Natural killer cell (primary cell): ENCODE measurements at regions of chr11 and their contacts with region 1.

Region 1: GRCh38 chr11:33065445-33066178 is 26.2 kb downstream of the TCP11L1 start:
- DNase-seq: peak; percentile 62 to 85
- ATAC-seq: peak; percentile 87 to 93 (median 92)
- H3K4me3 ChIP-seq: no peak overlapping the region
- H3K4me3 Mint-ChIP-seq: no peak overlapping the region
- H3K27ac ChIP-seq: no peak overlapping the region
- H3K27ac Mint-ChIP-seq: peak overlapping the region in 1 of 2 donors; percentile 42
- H3K4me1 ChIP-seq: peaks cover 20% of the 10 kb centered on the region
- H3K4me1 Mint-ChIP-seq: peaks cover 21 to 24% of the 10 kb centered on the region in 2 donors
- H3K27me3 ChIP-seq: no peaks in the 10 kb centered on the region
- H3K27me3 Mint-ChIP-seq: no peaks in the 10 kb centered on the region
- CTCF ChIP-seq: peak; percentile 83

Region 2: GRCh38 chr11:32809313-32809712 is 256.3 kb before region 1 on chr11:
- intact Hi-C with region 1: loop called (anchors 1 kb)
- DNase-seq: peak in 1 of 2 donors; percentile 54
- ATAC-seq: peak; percentile 62 to 74 (median 62)
- H3K4me3 ChIP-seq: no peak overlapping the region
- H3K4me3 Mint-ChIP-seq: no peak overlapping the region
- H3K27ac ChIP-seq: no peak overlapping the region
- H3K27ac Mint-ChIP-seq: no peak overlapping the region
- H3K4me1 ChIP-seq: no peaks in the 10 kb centered on the region
- H3K4me1 Mint-ChIP-seq: no peaks in the 10 kb centered on the region
- H3K27me3 ChIP-seq: no peaks in the 10 kb centered on the region
- H3K27me3 Mint-ChIP-seq: no peaks in the 10 kb centered on the region
- CTCF ChIP-seq: peak; percentile 58

Region 3: DNA sequence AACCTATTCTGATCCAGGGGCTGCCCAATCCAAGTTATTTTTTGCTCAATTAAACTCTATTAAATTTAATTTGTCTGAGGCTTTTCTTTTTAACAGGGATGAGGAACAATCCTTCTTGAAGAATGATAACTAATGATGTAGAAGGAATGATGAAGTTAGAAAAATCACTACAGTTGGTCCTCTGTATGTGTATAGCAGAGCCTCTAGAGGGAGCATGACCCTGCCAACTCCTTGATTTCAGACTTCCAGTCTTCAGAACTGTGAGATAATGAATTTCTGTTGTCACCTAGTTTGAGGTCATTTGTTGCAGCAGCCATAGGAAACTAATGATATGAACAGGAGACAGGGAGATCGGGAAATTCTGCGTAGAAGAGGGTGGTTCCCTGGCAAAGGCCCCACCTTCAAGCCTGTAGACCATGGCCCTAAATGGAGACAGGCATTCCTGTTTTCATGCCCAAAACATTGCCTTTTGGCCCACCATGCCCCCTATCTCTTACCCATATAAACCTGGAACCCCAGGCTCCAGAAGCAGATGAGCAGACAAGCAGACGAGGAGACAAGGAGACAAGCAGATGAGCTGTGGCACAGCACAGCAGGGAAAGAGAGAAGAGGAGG is 180.7 kb before region 1 on chr11:
- intact Hi-C with region 1: loop called (anchors 2 kb)
- DNase-seq: peak in 1 of 2 donors; percentile 34
- ATAC-seq: peak in 2 of 3 donors; percentile 48 to 52
- H3K4me3 ChIP-seq: no peak overlapping the region
- H3K4me3 Mint-ChIP-seq: no peak overlapping the region
- H3K27ac ChIP-seq: no peak overlapping the region
- H3K27ac Mint-ChIP-seq: no peak overlapping the region
- H3K4me1 ChIP-seq: no peaks in the 10 kb centered on the region
- H3K4me1 Mint-ChIP-seq: no peaks in the 10 kb centered on the region
- H3K27me3 ChIP-seq: no peaks in the 10 kb centered on the region
- H3K27me3 Mint-ChIP-seq: peaks cover 0 to 6% of the 10 kb centered on the region in 2 donors
- CTCF ChIP-seq: peak; percentile 29

Region 4: DNA sequence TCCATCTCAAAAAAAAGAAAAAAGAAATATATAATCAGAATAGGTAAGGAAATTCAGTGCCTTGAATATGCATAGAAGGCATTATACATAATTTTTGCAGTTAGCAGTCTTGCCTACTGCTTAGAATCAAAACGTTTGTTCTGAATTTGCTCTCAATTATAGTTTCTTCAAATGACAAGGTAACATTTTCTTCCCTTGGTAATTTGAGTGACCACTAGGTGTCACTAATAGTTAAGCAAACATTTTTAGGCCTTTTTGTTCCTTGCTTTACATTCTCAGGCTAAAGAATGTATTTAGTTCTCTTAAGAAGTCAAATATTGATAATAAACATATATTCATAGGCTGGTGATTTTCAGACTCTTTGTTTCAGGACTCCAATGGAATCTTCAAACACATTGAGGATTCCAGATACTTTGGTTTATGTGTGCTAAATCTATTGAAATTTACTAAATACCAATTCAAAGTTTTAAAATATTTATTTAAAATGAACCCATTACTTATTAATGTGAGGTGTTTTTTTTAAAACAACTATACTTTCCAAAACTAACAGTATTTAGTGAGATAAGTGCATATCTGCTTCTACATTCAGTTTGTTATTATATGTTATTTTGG is 105.0 kb before region 1 on chr11:
- intact Hi-C with region 1: loop called (anchors 1 kb)
- DNase-seq: peak in 1 of 2 donors; percentile 75
- ATAC-seq: peak in 2 of 3 donors; percentile 45 to 64
- H3K4me3 ChIP-seq: no peak overlapping the region
- H3K4me3 Mint-ChIP-seq: no peak overlapping the region
- H3K27ac ChIP-seq: no peak overlapping the region
- H3K27ac Mint-ChIP-seq: no peak overlapping the region
- H3K4me1 ChIP-seq: no peaks in the 10 kb centered on the region
- H3K4me1 Mint-ChIP-seq: peaks cover 0 to 10% of the 10 kb centered on the region in 2 donors
- H3K27me3 ChIP-seq: no peaks in the 10 kb centered on the region
- H3K27me3 Mint-ChIP-seq: no peaks in the 10 kb centered on the region
- CTCF ChIP-seq: peak; percentile 76

Region 5: GRCh38 chr11:33110083-33110482 is 44.5 kb after region 1 on chr11:
- intact Hi-C with region 1: no loop called
- DNase-seq: no peak
- ATAC-seq: no peak
- H3K4me3 ChIP-seq: no peak overlapping the region
- H3K4me3 Mint-ChIP-seq: no peak overlapping the region
- H3K27ac ChIP-seq: no peak overlapping the region
- H3K27ac Mint-ChIP-seq: no peak overlapping the region
- H3K4me1 ChIP-seq: no peaks in the 10 kb centered on the region
- H3K4me1 Mint-ChIP-seq: no peaks in the 10 kb centered on the region
- H3K27me3 ChIP-seq: no peaks in the 10 kb centered on the region
- H3K27me3 Mint-ChIP-seq: no peaks in the 10 kb centered on the region
- CTCF ChIP-seq: no peak

Region 6: GRCh38 chr11:33172996-33173395 is 107.4 kb after region 1 on chr11:
- intact Hi-C with region 1: no loop called
- DNase-seq: no peak
- ATAC-seq: no peak
- H3K4me3 ChIP-seq: no peak overlapping the region
- H3K4me3 Mint-ChIP-seq: no peak overlapping the region
- H3K27ac ChIP-seq: no peak overlapping the region
- H3K27ac Mint-ChIP-seq: no peak overlapping the region
- H3K4me1 ChIP-seq: no peaks in the 10 kb centered on the region
- H3K4me1 Mint-ChIP-seq: no peaks in the 10 kb centered on the region
- H3K27me3 ChIP-seq: no peaks in the 10 kb centered on the region
- H3K27me3 Mint-ChIP-seq: no peaks in the 10 kb centered on the region
- CTCF ChIP-seq: no peak